Activated CD8-positive, alpha-beta T cell treated with anti-CD3 and anti-CD28 coated beads for 36 hours (primary cell): ENCODE measurements at regions of chr10 and their contacts with region 1.

Region 1: GRCh38 chr10:61903221-61903927 is 1.9 kb downstream of the ARID5B start:
- DNase-seq: peak; percentile 87
- ATAC-seq: peak; percentile 50
- H3K4me3 Mint-ChIP-seq: peak overlapping the region; percentile 86
- H3K27ac Mint-ChIP-seq: peak overlapping the region; percentile 97
- H3K4me1 Mint-ChIP-seq: peaks cover 38% of the 10 kb centered on the region
- H3K27me3 Mint-ChIP-seq: no peaks in the 10 kb centered on the region
- CTCF ChIP-seq: no peak

Region 2: GRCh38 chr10:61937631-61938351 is 34.4 kb after region 1 on chr10:
- CTCF ChIA-PET with region 1: interaction called, 98 read pairs
- POLR2A ChIA-PET with region 1: interaction called, 137 read pairs
- intact Hi-C with region 1: no loop called
- DNase-seq: no peak
- ATAC-seq: peak; percentile 41
- H3K4me3 Mint-ChIP-seq: peak overlapping the region; percentile 9
- H3K27ac Mint-ChIP-seq: peak overlapping the region; percentile 92
- H3K4me1 Mint-ChIP-seq: peaks cover 81% of the 10 kb centered on the region
- H3K27me3 Mint-ChIP-seq: no peaks in the 10 kb centered on the region
- CTCF ChIP-seq: no peak

Region 3: DNA sequence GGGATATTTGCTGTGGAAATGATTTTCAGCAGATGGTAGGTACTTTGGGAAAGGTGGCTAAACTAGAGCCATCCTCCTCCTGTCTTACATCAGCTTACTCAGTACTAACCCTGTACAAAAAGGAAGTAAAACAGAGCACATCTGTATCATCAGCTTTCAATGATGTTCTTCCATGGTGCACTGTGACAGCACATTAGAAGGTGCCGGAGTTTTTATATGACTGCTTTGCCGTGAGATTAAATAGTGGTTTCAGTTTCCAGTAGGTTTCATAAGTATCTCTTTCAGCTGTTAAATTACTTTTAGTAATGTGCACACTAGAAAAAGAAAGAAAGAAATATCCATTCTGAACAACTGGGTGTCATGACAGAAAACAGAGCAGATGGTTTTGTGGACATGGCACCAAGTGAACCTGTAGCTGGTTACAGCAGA is 84.6 kb after region 1 on chr10:
- CTCF ChIA-PET with region 1: interaction called, 8 read pairs
- POLR2A ChIA-PET with region 1: interaction called, 17 read pairs
- intact Hi-C with region 1: loop called (anchors 2 kb)
- DNase-seq: peak; percentile 62
- ATAC-seq: peak; percentile 95
- H3K4me3 Mint-ChIP-seq: peak overlapping the region; percentile 58
- H3K27ac Mint-ChIP-seq: peak overlapping the region; percentile 99
- H3K4me1 Mint-ChIP-seq: peaks cover 80% of the 10 kb centered on the region
- H3K27me3 Mint-ChIP-seq: no peaks in the 10 kb centered on the region
- CTCF ChIP-seq: no peak

Region 4: GRCh38 chr10:62038609-62039190 is 135.3 kb after region 1 on chr10:
- CTCF ChIA-PET with region 1: interaction called, 68 read pairs
- POLR2A ChIA-PET with region 1: interaction called, 5 read pairs
- intact Hi-C with region 1: no loop called
- DNase-seq: peak; percentile 87
- ATAC-seq: peak; percentile 75
- H3K4me3 Mint-ChIP-seq: peak overlapping the region; percentile 1
- H3K27ac Mint-ChIP-seq: peak overlapping the region; percentile 82
- H3K4me1 Mint-ChIP-seq: peaks cover 62% of the 10 kb centered on the region
- H3K27me3 Mint-ChIP-seq: no peaks in the 10 kb centered on the region
- CTCF ChIP-seq: peak; percentile 81

Region 5: GRCh38 chr10:62244780-62245467 is 341.6 kb after region 1 on chr10:
- CTCF ChIA-PET with region 1: interaction called, 10 read pairs
- POLR2A ChIA-PET with region 1: interaction called, 4 read pairs
- intact Hi-C with region 1: loop called (anchors 5 kb)
- DNase-seq: peak; percentile 65
- ATAC-seq: peak; percentile 82
- H3K4me3 Mint-ChIP-seq: no peak overlapping the region
- H3K27ac Mint-ChIP-seq: peak overlapping the region; percentile 74
- H3K4me1 Mint-ChIP-seq: peaks cover 33% of the 10 kb centered on the region
- H3K27me3 Mint-ChIP-seq: no peaks in the 10 kb centered on the region
- CTCF ChIP-seq: peak; percentile 87